Psoas muscle (tissue), 8 donors: ENCODE measurements at regions of chr17 and their contacts with region 1.

Region 1: DNA sequence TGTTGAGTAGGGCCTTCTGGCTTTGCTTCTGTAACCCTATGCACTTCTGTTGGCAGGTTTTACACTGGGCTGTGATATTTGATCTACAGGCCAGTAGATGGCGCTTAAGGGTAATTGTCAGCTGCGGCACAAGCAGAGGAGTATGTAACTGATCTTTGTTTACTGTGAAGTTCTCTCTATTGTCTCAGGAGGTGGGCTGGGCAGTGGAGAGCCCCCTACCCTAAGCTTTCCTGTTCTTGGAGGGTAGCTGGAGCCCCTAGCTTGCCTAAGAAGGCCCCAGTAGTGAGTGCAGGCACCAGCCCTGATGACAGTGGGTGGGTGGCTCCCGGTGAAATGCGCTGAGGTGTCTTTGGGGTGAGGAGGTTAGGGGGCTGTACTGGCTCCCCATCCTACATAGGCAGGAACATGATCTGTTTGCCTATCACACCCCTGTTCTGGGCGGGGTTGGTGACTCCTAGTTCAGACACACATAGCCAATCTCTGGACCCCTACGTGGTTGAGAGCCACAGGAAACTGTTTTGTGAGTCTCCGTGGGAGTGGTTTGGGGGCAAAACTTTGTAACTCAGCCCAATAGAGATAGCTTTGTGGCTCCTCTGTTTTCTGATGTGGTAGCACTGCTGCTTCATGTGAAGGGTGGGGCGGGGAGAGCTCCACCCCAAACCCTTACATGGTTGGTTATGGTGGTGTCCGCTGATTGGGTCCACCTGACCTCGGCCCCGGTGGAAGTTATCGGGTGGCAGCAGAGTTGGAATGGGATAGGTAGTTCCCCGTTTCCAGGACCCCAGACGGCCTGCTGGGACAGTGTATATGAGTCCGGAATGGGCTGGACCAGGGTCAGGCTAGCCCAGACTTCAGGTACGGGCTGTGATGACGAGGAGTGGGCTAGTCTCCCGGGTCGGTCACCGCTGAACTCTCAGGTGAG is 60.4 kb downstream of the SLFN11 start:
- DNase-seq: peak; percentile 24 to 69
- ATAC-seq: peak; percentile 79 to 86 (median 84)
- H3K4me3 ChIP-seq: peak overlapping the region; percentile 63
- H3K27ac ChIP-seq: peak overlapping the region; percentile 84
- H3K4me1 ChIP-seq: peaks cover 22% of the 10 kb centered on the region
- H3K27me3 ChIP-seq: no peaks in the 10 kb centered on the region
- CTCF ChIP-seq: peak; percentile 81

Region 2: GRCh38 chr17:35104844-35105450 is 208.1 kb before region 1 on chr17:
- intact Hi-C with region 1: no loop called
- DNase-seq: no peak
- ATAC-seq: no peak
- H3K4me3 ChIP-seq: no peak overlapping the region
- H3K27ac ChIP-seq: no peak overlapping the region
- H3K4me1 ChIP-seq: no peaks in the 10 kb centered on the region
- H3K27me3 ChIP-seq: no peaks in the 10 kb centered on the region
- CTCF ChIP-seq: no peak

Region 3: DNA sequence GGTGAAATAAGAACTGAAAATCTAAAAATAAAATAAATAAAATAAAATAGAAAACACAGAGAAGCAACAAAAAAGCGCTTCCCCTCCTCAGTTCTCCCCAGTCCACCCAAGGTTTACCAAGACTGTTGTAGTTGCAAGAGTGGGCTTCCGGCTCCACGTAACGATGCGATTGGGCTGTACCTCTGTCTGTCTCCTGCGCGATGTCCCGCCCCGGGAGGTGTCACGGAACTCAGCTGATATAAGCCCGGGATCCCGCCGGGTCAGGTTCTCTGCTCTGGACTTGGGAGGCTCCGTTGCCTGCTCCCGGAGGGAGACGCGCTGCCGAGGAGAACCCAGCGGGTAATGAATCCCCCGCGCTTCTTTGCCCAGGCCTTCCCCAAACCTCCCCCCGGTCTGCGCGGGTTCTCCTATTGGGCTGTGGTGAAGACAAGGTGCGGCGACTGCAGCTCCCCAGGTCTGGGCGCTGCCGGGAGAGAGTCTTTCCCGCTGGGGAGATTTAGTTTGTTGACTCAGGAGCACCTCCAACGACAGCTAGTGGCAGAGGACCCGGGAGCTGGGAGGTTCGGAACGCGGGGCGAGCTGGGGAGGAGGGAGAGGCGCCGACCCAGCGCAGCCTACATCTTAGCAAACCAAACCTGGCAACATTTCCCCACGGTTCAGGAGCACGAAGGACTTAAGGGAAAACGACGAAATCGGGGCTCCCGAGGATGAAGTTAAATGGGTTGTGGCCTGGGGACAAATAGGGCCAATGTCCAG is 70.1 kb before region 1 on chr17 and contains the start of gene SLFN5:
- intact Hi-C with region 1: loop called in 1 of 2 experiments (anchors 10 kb)
- DNase-seq: peak; percentile 93 to 96
- ATAC-seq: peak; percentile 93 to 96 (median 94)
- H3K4me3 ChIP-seq: peak within 1 kb of the TSS; percentile 89
- H3K27ac ChIP-seq: peak within 1 kb of the TSS; percentile 91
- H3K4me1 ChIP-seq: peaks cover 25% of the 10 kb centered on the region
- H3K27me3 ChIP-seq: no peaks in the 10 kb centered on the region
- CTCF ChIP-seq: no peak
- total RNA-seq, gene SLFN5: 14.5 to 23.7 (median 20.0) TPM

Region 4: DNA sequence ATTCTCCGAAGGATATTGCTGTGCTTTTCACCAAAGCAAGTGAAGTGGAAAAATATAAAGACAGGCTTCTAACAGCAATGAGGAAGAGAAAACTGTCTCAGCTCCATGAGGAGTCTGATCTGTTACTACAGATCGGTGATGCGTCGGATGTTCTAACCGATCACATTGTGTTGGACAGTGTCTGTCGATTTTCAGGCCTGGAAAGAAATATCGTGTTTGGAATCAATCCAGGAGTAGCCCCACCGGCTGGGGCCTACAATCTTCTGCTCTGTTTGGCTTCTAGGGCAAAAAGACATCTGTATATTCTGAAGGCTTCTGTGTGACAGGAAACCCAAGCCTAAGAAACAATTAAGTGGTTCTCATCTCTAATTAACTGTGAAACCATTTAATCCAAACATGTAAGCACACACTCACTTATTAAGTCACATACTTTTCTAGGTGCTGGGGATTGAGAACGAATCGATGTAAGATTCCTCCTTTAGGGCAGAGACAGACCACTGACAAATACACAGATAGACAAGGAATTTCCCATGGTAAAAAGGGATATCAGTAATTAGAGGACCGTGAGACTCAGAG is 47.4 kb before region 1 on chr17:
- intact Hi-C with region 1: no loop called
- DNase-seq: no peak
- ATAC-seq: no peak
- H3K4me3 ChIP-seq: no peak overlapping the region
- H3K27ac ChIP-seq: no peak overlapping the region
- H3K4me1 ChIP-seq: no peaks in the 10 kb centered on the region
- H3K27me3 ChIP-seq: no peaks in the 10 kb centered on the region
- CTCF ChIP-seq: no peak

Region 5: GRCh38 chr17:35373534-35373983 is 60.5 kb after region 1 on chr17 and contains the start of gene SLFN11:
- intact Hi-C with region 1: loop called in 1 of 2 experiments (anchors 5 kb)
- DNase-seq: peak; percentile 84 to 90
- ATAC-seq: peak; percentile 72 to 88 (median 84)
- H3K4me3 ChIP-seq: peak within 1 kb of the TSS; percentile 69
- H3K27ac ChIP-seq: peak within 1 kb of the TSS; percentile 81
- H3K4me1 ChIP-seq: peaks cover 3% of the 10 kb centered on the region
- H3K27me3 ChIP-seq: peaks cover 0 to 49% (median 5%) of the 10 kb centered on the region in 3 donors
- CTCF ChIP-seq: no peak
- total RNA-seq, gene SLFN11: 6.9 to 11.3 (median 8.8) TPM

Region 6: DNA sequence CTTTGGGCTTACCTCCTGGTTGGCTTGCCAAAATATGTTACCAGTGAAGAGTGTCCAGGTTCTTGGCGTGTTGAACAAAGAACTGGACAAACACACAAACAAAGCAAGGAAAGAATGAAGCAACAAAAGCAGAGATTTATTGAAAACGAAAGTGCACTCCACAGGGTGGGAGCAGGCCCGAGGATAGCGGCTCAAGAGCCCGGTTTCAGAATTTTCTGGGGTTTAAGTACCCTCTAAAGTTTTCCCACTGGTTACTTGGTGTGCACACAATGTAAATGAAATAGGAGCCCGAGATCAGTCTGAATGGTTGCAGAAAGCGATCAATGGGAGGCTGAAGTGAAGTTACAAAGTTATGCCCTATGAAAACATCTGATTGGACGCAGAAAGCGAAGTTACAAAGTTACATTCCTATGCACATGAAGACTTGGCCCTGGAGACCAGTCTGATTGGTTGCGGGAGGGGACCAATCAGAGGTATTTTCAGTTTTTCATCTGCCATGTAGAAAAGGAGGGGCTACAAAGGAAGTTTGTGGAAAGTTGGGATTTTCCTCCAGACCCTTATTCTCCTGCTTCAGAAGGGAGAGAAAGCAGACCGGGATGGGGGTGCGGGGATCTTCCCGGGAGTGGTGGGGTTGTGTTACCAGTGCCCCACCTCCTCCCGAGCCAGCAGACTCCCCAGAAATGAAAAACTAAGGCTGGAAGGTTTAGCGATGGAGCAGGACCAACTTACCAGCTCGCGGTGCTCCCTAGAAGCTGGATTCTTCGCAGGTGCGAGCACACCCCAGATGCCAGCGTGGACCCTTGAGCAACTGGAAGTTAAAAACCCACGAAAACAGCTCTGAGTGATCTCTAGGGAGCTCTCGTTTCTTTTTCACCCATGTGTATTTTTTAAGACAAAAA is 119.4 kb after region 1 on chr17 and contains the start of gene SLFN12:
- intact Hi-C with region 1: loop called in 1 of 2 experiments (anchors 10 kb)
- DNase-seq: peak; percentile 49 to 57
- ATAC-seq: peak; percentile 47 to 89 (median 81)
- H3K4me3 ChIP-seq: peak within 1 kb of the TSS; percentile 70
- H3K27ac ChIP-seq: peak within 1 kb of the TSS; percentile 71
- H3K4me1 ChIP-seq: no peaks in the 10 kb centered on the region
- H3K27me3 ChIP-seq: peaks cover 2 to 22% (median 2%) of the 10 kb centered on the region in 3 donors
- CTCF ChIP-seq: no peak
- total RNA-seq, gene SLFN12: 1.3 to 3.8 (median 1.9) TPM

Region 7: GRCh38 chr17:35537601-35538141 is 224.6 kb after region 1 on chr17 and contains the start of gene SLFN12L:
- intact Hi-C with region 1: loop called (anchors 1 to 2 kb)
- DNase-seq: no peak
- ATAC-seq: no peak
- H3K4me3 ChIP-seq: peak within 1 kb of the TSS; percentile 20
- H3K27ac ChIP-seq: peak within 1 kb of the TSS; percentile 19
- H3K4me1 ChIP-seq: no peaks in the 10 kb centered on the region
- H3K27me3 ChIP-seq: peaks cover 0 to 3% (median 0%) of the 10 kb centered on the region in 3 donors
- CTCF ChIP-seq: no peak
- total RNA-seq, gene SLFN12L: 0.17 to 0.30 (median 0.26) TPM in 3 of 4 donors, not detected in the other

Region 8: GRCh38 chr17:35747540-35748017 is 434.5 kb after region 1 on chr17:
- intact Hi-C with region 1: loop called (anchors 10 kb)
- DNase-seq: peak; percentile 67 to 84
- ATAC-seq: peak; percentile 86 to 93 (median 89)
- H3K4me3 ChIP-seq: no peak overlapping the region
- H3K27ac ChIP-seq: no peak overlapping the region
- H3K4me1 ChIP-seq: no peaks in the 10 kb centered on the region
- H3K27me3 ChIP-seq: peaks cover 0 to 16% (median 4%) of the 10 kb centered on the region in 3 donors
- CTCF ChIP-seq: peak; percentile 94